ENCODE measurements at regions of chr15 and their contacts with region 1.

Region 1: DNA sequence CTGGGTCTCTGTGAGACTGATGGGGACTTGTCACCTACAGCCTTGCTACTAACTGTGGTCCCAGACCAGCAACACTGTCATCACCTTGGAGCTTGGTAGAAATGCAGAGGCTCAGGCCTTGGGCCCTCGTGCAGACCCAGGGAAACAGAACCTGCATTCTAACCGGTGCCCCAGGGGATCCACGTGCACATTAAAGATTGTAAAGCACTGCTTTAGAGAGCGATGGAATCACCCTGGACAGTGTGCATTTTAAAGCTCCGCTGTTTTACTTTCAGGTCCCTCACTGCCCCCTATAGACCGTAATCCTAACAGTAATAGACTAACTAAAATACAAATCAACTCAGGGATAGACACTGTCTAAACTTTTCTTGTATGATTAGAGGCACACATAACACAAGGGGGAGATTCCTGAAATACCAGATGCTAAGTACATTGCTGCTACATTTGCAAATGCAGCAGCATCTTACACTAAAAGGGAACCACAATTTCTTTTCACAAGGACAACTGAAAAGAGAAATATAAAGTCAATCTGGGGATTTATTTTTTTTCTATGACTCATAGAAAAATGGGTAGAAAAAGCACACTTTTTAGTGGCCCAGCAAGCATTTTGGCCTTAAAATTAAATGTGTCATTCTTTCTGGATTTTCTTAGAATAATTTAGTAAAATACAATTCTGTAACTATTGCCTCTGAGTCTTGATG is 10.5 kb upstream of the SH3GL3 start:
- DNase-seq: peak in 1 of 2 experiments; percentile 49
- H3K4me3 ChIP-seq: no peak overlapping the region
- H3K27ac ChIP-seq: no peak overlapping the region
- H3K4me1 ChIP-seq: peaks cover 0 to 7% (median 0%) of the 10 kb centered on the region in 4 experiments; a peak in 1 of 7 replicates
- H3K27me3 ChIP-seq: no peaks in the 10 kb centered on the region
- CTCF ChIP-seq: peak in 2 of 3 experiments; percentile 50 to 62; a peak in 2 of 4 replicates
- EP300 ChIP-seq: no peak
- POLR2A ChIP-seq: no peak
- RAD21 ChIP-seq: peak; percentile 86 to 88

Region 2: GRCh38 chr15:83305704-83306291 is 130.8 kb before region 1 on chr15:
- CTCF ChIA-PET with region 1: interaction called, 10 read pairs
- POLR2A ChIA-PET with region 1: no interaction called
- DNase-seq: no peak
- H3K4me3 ChIP-seq: peak overlapping the region in 1 of 4 experiments; percentile 7; a peak in 1 of 8 replicates
- H3K27ac ChIP-seq: no peak overlapping the region
- H3K4me1 ChIP-seq: peaks cover 9 to 27% (median 15%) of the 10 kb centered on the region in 4 experiments
- H3K27me3 ChIP-seq: no peaks in the 10 kb centered on the region; a peak in 1 of 7 replicates
- CTCF ChIP-seq: no peak
- EP300 ChIP-seq: no peak
- POLR2A ChIP-seq: no peak
- RAD21 ChIP-seq: no peak

Region 3: DNA sequence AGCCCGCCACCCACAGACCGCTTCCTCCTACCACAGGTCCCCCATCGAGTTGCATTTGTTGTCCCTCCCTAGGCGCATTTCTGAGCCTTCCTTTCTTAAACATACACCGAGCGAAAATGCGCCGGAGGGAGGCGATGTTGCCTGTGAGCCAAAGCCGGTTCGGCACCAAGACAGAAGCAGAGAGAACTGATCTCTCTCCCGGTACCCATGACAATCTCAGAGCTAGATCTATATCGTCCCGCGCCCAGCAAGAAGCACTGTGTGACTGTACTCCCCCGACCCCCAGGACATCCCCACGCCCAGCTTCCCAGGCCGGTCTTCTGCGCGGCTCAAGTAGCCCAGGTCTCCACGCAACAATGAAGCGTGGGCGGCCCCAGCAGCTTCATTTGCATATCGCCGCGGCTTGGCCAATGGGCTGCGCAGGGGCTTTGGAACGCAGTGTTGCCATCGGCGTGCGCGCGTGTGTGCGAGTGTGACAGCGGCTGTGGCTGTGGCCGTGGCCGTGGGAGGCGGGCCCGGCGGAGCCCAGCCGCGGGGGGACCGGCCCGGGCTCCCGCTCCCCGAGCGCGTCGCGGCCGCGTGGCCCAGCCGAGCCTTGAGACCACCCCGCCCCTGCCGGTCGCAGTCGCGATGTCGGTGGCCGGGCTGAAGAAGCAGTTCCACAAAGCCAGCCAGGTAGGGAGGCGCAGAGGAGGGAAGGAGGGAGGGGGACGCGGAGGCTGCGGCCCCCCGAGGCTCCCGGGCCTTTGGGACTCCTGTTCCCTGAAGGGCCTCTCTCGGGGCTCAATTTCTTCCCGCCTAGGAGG is 10.5 kb after region 1 on chr15 and contains the start of gene SH3GL3:
- CTCF ChIA-PET with region 1: interaction called, 39 read pairs
- POLR2A ChIA-PET with region 1: no interaction called
- DNase-seq: peak; percentile 64 to 85
- H3K4me3 ChIP-seq: peak within 1 kb of the TSS; percentile 48 to 80 (median 70)
- H3K27ac ChIP-seq: 0 out of 2 replicates have a peak within 1 kb of the TSS, but pooled peaks have one; percentile 4
- H3K4me1 ChIP-seq: peaks cover 0 to 9% (median 4%) of the 10 kb centered on the region in 4 experiments; a peak in 4 of 7 replicates
- H3K27me3 ChIP-seq: peaks cover 0 to 11% (median 7%) of the 10 kb centered on the region in 4 experiments; a peak in 5 of 7 replicates
- CTCF ChIP-seq: peak; percentile 60 to 68 (median 66)
- EP300 ChIP-seq: no peak
- POLR2A ChIP-seq: peak in 1 of 2 experiments; percentile 58; a peak in 1 of 3 replicates
- RAD21 ChIP-seq: peak; percentile 78 to 85
- total RNA-seq, gene SH3GL3: 16.3 and 19.1 TPM in 2 replicates

Region 4: DNA sequence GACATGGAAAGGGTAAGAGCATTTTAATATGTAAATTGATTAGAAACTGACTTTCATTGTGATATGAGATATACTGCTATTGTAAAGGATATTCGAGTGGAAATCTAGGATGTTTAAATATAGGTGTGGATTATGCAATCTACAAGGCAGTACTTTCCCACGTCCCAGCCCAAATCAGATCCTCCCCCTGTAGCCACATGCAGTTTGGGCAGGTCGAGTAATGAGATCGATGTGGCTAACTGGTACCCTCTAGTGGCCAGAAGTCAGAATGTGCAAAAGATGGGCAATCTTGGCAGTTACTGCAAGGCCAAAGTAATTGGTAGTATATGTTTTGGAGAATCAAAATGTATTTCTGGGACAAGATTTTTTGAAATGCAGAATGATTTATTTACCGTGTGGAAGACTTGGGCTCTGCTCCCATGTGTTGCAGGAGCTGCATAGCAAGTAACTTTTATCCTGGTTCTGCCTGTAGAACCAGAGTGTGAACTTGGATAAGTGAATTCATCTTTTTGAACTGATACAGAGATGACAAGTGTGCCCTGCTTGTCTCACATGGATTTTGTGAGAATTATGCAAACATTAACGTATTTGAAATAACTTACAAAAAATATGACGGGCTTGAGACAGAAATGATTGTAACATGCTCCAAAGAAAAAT is 122.8 kb after region 1 on chr15:
- CTCF ChIA-PET with region 1: interaction called, 245 read pairs
- POLR2A ChIA-PET with region 1: interaction called, 5 read pairs
- DNase-seq: peak; percentile 46 to 74
- H3K4me3 ChIP-seq: no peak overlapping the region
- H3K27ac ChIP-seq: no peak overlapping the region
- H3K4me1 ChIP-seq: no peaks in the 10 kb centered on the region
- H3K27me3 ChIP-seq: no peaks in the 10 kb centered on the region
- CTCF ChIP-seq: peak; percentile 54 to 94 (median 91)
- EP300 ChIP-seq: no peak; a peak in 1 of 3 replicates
- POLR2A ChIP-seq: no peak
- RAD21 ChIP-seq: peak; percentile 96 to 100

Region 5: DNA sequence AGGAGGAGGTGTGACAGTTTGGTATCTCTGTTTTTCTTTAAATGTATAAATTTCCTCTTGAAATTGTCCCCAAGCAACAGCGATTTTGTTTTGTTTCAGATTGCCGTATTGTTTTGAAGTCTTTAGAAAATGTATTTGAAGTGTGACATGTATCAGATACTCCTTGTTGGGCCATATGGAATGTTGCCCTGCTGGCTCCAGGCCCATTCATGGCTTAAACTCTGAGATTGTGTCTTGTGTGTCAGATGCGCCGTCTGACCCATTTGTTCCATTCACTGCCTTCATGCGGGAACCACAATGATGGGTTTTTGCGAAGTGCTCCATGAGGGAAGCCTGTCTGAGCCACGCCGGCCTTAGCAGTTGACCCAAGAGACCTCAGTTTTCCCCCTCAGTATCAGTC is 142.1 kb after region 1 on chr15:
- CTCF ChIA-PET with region 1: interaction called, 60 read pairs
- POLR2A ChIA-PET with region 1: no interaction called
- DNase-seq: no peak
- H3K4me3 ChIP-seq: no peak overlapping the region
- H3K27ac ChIP-seq: no peak overlapping the region
- H3K4me1 ChIP-seq: no peaks in the 10 kb centered on the region
- H3K27me3 ChIP-seq: no peaks in the 10 kb centered on the region
- CTCF ChIP-seq: no peak
- EP300 ChIP-seq: no peak
- POLR2A ChIP-seq: no peak
- RAD21 ChIP-seq: no peak

Region 6: GRCh38 chr15:83890587-83890986 is 454.0 kb after region 1 on chr15:
- CTCF ChIA-PET with region 1: interaction called, 10 read pairs
- POLR2A ChIA-PET with region 1: no interaction called
- DNase-seq: no peak
- H3K4me3 ChIP-seq: no peak overlapping the region
- H3K27ac ChIP-seq: no peak overlapping the region
- H3K4me1 ChIP-seq: no peaks in the 10 kb centered on the region
- H3K27me3 ChIP-seq: no peaks in the 10 kb centered on the region
- CTCF ChIP-seq: no peak
- EP300 ChIP-seq: no peak
- POLR2A ChIP-seq: no peak
- RAD21 ChIP-seq: no peak

Measured in H1 (cell line).